Head of caudate nucleus (tissue), 42 donors: ENCODE measurements at regions of chr11 and their contacts with region 1.

Region 1: GRCh38 chr11:73141848-73142286 is 251 bp downstream of the FCHSD2 start:
- DNase-seq: peak in 26 of 42 donors; percentile 12 to 84 (median 62)

Region 2: GRCh38 chr11:72831513-72832300 is 310.2 kb before region 1 on chr11:
- intact Hi-C with region 1: loop called (anchors 10 kb)
- DNase-seq: peak; percentile 79 to 96 (median 90)

Region 3: GRCh38 chr11:72924568-72925190 is 217.2 kb before region 1 on chr11:
- intact Hi-C with region 1: loop called (anchors 10 kb)
- DNase-seq: no peak

Region 4: GRCh38 chr11:73177778-73178577 is 36.1 kb after region 1 on chr11:
- intact Hi-C with region 1: loop called (anchors 5 kb)
- DNase-seq: peak; percentile 78 to 94 (median 88)